B cell (primary cell): ENCODE measurements at regions of chr1 and their contacts with region 1.

Region 1: GRCh38 chr1:234610348-234611152 is 572 bp upstream of the IRF2BP2 start:
- DNase-seq: peak; percentile 95
- ATAC-seq: peak; percentile 50
- H3K4me3 ChIP-seq: peak overlapping the region; percentile 54 to 95 (median 70)
- H3K4me3 Mint-ChIP-seq: peak overlapping the region; percentile 98
- H3K27ac ChIP-seq: peak overlapping the region; percentile 78 to 94
- H3K27ac Mint-ChIP-seq: peak overlapping the region; percentile 99
- H3K4me1 ChIP-seq: peaks cover 46 to 49% of the 10 kb centered on the region in 2 donors
- H3K4me1 Mint-ChIP-seq: peaks cover 56% of the 10 kb centered on the region
- H3K27me3 ChIP-seq: no peaks in the 10 kb centered on the region
- H3K27me3 Mint-ChIP-seq: no peaks in the 10 kb centered on the region
- CTCF ChIP-seq: no peak

Region 2: DNA sequence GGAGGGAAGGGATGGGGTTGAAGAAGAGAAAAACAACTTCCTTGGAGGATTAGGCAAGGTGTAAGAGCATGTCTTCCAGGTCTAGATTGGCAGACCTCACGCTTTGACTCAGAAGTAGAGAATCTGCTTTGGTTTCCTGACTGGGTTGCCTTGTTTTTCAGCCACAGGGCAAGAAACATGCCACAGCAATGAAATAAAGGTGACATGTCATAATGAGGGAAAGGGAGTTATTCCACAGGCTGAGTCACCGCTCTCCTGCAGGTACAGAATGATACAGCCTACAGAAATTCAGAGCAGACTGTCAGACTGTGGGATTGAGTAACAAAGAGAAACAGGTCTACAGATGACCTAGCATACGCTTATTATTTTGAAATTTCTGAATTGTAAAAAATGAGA is 45.9 kb before region 1 on chr1:
- CTCF ChIA-PET with region 1: no interaction called
- POLR2A ChIA-PET with region 1: no interaction called
- intact Hi-C with region 1: no loop called
- DNase-seq: no peak
- ATAC-seq: no peak
- H3K4me3 ChIP-seq: no peak overlapping the region
- H3K4me3 Mint-ChIP-seq: no peak overlapping the region
- H3K27ac ChIP-seq: no peak overlapping the region
- H3K27ac Mint-ChIP-seq: no peak overlapping the region
- H3K4me1 ChIP-seq: no peaks in the 10 kb centered on the region
- H3K4me1 Mint-ChIP-seq: no peaks in the 10 kb centered on the region
- H3K27me3 ChIP-seq: no peaks in the 10 kb centered on the region
- H3K27me3 Mint-ChIP-seq: no peaks in the 10 kb centered on the region
- CTCF ChIP-seq: no peak

Region 3: GRCh38 chr1:234599617-234600417 is 10.7 kb before region 1 on chr1:
- CTCF ChIA-PET with region 1: interaction called, 70 read pairs
- POLR2A ChIA-PET with region 1: interaction called, 50 read pairs
- intact Hi-C with region 1: loop called (anchors 1 kb)
- DNase-seq: peak; percentile 89
- ATAC-seq: peak; percentile 73
- H3K4me3 ChIP-seq: peak overlapping the region; percentile 56 to 84 (median 66)
- H3K4me3 Mint-ChIP-seq: peak overlapping the region; percentile 90
- H3K27ac ChIP-seq: peak overlapping the region; percentile 83 to 93
- H3K27ac Mint-ChIP-seq: peak overlapping the region; percentile 97
- H3K4me1 ChIP-seq: peaks cover 53 to 54% of the 10 kb centered on the region in 2 donors
- H3K4me1 Mint-ChIP-seq: peaks cover 54% of the 10 kb centered on the region
- H3K27me3 ChIP-seq: no peaks in the 10 kb centered on the region
- H3K27me3 Mint-ChIP-seq: no peaks in the 10 kb centered on the region
- CTCF ChIP-seq: no peak

Region 4: GRCh38 chr1:234730770-234731568 is 120.4 kb after region 1 on chr1:
- CTCF ChIA-PET with region 1: interaction called, 6 read pairs
- POLR2A ChIA-PET with region 1: interaction called, 10 read pairs
- intact Hi-C with region 1: no loop called
- DNase-seq: peak; percentile 72
- ATAC-seq: peak; percentile 80
- H3K4me3 ChIP-seq: no peak overlapping the region
- H3K4me3 Mint-ChIP-seq: peak overlapping the region; percentile 55
- H3K27ac ChIP-seq: peak overlapping the region; percentile 16 to 50
- H3K27ac Mint-ChIP-seq: peak overlapping the region; percentile 80
- H3K4me1 ChIP-seq: peaks cover 34 to 44% of the 10 kb centered on the region in 2 donors
- H3K4me1 Mint-ChIP-seq: peaks cover 44% of the 10 kb centered on the region
- H3K27me3 ChIP-seq: no peaks in the 10 kb centered on the region
- H3K27me3 Mint-ChIP-seq: no peaks in the 10 kb centered on the region
- CTCF ChIP-seq: peak; percentile 21

Region 5: GRCh38 chr1:234963180-234963903 is 352.8 kb after region 1 on chr1:
- CTCF ChIA-PET with region 1: interaction called, 7 read pairs
- POLR2A ChIA-PET with region 1: no interaction called
- intact Hi-C with region 1: loop called (anchors 1 kb)
- DNase-seq: peak; percentile 95
- ATAC-seq: peak; percentile 94
- H3K4me3 ChIP-seq: peak overlapping the region in 4 of 5 experiments; percentile 20 to 53 (median 35)
- H3K4me3 Mint-ChIP-seq: peak overlapping the region; percentile 88
- H3K27ac ChIP-seq: peak overlapping the region; percentile 83 to 90
- H3K27ac Mint-ChIP-seq: peak overlapping the region; percentile 96
- H3K4me1 ChIP-seq: peaks cover 50 to 62% of the 10 kb centered on the region in 2 donors
- H3K4me1 Mint-ChIP-seq: peaks cover 59% of the 10 kb centered on the region
- H3K27me3 ChIP-seq: no peaks in the 10 kb centered on the region
- H3K27me3 Mint-ChIP-seq: no peaks in the 10 kb centered on the region
- CTCF ChIP-seq: no peak

Region 6: DNA sequence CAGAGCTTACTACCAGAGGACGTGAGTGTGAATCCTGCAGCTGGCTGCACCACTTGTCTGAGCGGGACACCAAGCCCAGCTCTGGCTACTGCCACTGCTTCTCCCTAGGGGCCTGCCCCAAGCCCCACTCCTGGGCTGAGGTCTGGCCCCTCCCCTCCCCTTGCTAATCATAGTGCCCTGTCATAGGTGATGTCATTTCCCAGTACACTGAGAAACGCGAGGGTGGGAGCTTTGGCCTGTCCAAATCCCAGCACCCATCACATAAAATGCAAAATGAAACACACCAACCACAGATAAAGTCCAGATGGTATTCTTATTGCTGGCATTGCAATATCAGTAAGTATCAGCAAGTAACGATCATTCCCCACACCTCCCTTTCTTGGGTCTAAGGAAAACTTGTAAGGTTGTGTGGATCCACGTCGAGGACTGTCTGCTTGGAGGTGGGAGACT is 440.4 kb after region 1 on chr1:
- CTCF ChIA-PET with region 1: no interaction called
- POLR2A ChIA-PET with region 1: interaction called, 10 read pairs
- intact Hi-C with region 1: no loop called
- DNase-seq: no peak
- ATAC-seq: peak; percentile 55
- H3K4me3 ChIP-seq: no peak overlapping the region
- H3K4me3 Mint-ChIP-seq: peak overlapping the region; percentile 32
- H3K27ac ChIP-seq: no peak overlapping the region
- H3K27ac Mint-ChIP-seq: peak overlapping the region; percentile 74
- H3K4me1 ChIP-seq: peaks cover 13 to 22% of the 10 kb centered on the region in 2 donors
- H3K4me1 Mint-ChIP-seq: peaks cover 41% of the 10 kb centered on the region
- H3K27me3 ChIP-seq: no peaks in the 10 kb centered on the region
- H3K27me3 Mint-ChIP-seq: no peaks in the 10 kb centered on the region
- CTCF ChIP-seq: no peak